T-cell (primary cell): ENCODE measurements at regions of chr19 and their contacts with region 1.

Region 1: GRCh38 chr19:11279496-11280236 is 16.3 kb upstream of the TSPAN16 start:
- DNase-seq: peak in 33 of 35 experiments; percentile 4 to 75 (median 33)
- ATAC-seq: peak; percentile 75 to 98 (median 92)
- H3K4me3 ChIP-seq: peak overlapping the region in 1 of 2 donors; percentile 23
- H3K4me3 Mint-ChIP-seq: peak overlapping the region in 2 of 3 donors; percentile 13 to 27
- H3K27ac ChIP-seq: no peak overlapping the region
- H3K27ac Mint-ChIP-seq: peak overlapping the region in 1 of 2 donors; percentile 27
- H3K4me1 ChIP-seq: peaks cover 6 to 24% of the 10 kb centered on the region in 2 experiments
- H3K4me1 Mint-ChIP-seq: peaks cover 9 to 21% (median 10%) of the 10 kb centered on the region in 3 donors
- H3K27me3 ChIP-seq: peaks cover 10 to 69% of the 10 kb centered on the region in 2 experiments
- H3K27me3 Mint-ChIP-seq: peaks cover 25 to 47% of the 10 kb centered on the region in 2 donors

Region 2: GRCh38 chr19:11261941-11262839 is 17.5 kb before region 1 on chr19 and contains the start of gene DOCK6:
- CTCF ChIA-PET with region 1: no interaction called
- POLR2A ChIA-PET with region 1: no interaction called
- DNase-seq: peak in 5 of 35 experiments; percentile 13 to 22 (median 17)
- ATAC-seq: peak; percentile 60 to 80 (median 70)
- H3K4me3 ChIP-seq: peak within 1 kb of the TSS; percentile 25 to 36
- H3K4me3 Mint-ChIP-seq: peak within 1 kb of the TSS; percentile 66 to 74 (median 69)
- H3K27ac ChIP-seq: no peak within 1 kb of the TSS
- H3K27ac Mint-ChIP-seq: no peak within 1 kb of the TSS
- H3K4me1 ChIP-seq: peaks cover 0 to 13% of the 10 kb centered on the region in 2 experiments
- H3K4me1 Mint-ChIP-seq: peaks cover 0 to 8% (median 1%) of the 10 kb centered on the region in 3 donors
- H3K27me3 ChIP-seq: peaks cover 7 to 64% of the 10 kb centered on the region in 2 experiments
- H3K27me3 Mint-ChIP-seq: peaks cover 31 to 58% of the 10 kb centered on the region in 2 donors
- total RNA-seq, gene DOCK6: 0.78 to 1.8 (median 1.0) TPM

Region 3: GRCh38 chr19:11290256-11290655 is 10.6 kb after region 1 on chr19:
- CTCF ChIA-PET with region 1: interaction called in 1 of 2 experiments, 14 read pairs
- POLR2A ChIA-PET with region 1: no interaction called
- DNase-seq: no peak
- ATAC-seq: no peak
- H3K4me3 ChIP-seq: no peak overlapping the region
- H3K4me3 Mint-ChIP-seq: no peak overlapping the region
- H3K27ac ChIP-seq: no peak overlapping the region
- H3K27ac Mint-ChIP-seq: no peak overlapping the region
- H3K4me1 ChIP-seq: peaks cover 0 to 8% of the 10 kb centered on the region in 2 experiments
- H3K4me1 Mint-ChIP-seq: peaks cover 5 to 9% (median 7%) of the 10 kb centered on the region in 3 donors
- H3K27me3 ChIP-seq: peaks cover 0 to 81% of the 10 kb centered on the region in 2 experiments
- H3K27me3 Mint-ChIP-seq: peaks cover 22 to 44% of the 10 kb centered on the region in 2 donors

Region 4: DNA sequence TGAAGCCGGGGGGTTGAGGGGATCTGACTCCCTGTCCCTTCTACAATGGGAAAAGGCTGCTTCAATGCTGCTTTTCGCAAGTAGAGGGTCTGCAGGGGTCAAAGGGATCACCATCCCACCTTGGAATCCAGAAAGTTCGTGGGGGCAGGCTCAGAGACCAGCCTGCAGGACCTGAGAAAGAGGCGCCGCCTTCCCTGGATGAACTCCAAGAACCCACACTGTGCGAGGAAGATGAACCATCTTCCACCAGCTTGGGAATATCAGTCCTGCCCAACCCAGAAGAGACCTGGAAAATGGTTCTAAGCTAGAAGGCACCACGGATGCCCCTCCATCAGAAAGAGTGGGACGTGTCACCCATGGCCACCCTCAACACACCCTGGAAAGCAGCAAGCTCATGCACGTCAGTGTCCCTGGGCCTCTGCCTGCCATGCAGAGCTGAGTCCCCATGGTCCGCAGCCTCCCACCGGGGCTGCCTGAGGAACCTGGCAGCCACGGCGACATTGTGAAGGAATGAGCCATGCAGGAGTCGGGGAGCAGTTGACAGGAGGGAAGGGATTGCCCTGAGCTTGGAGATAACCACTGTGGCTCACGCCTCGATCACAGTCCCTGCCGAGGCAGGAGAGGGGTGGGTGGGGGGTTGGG is 45.2 kb after region 1 on chr19:
- CTCF ChIA-PET with region 1: no interaction called
- POLR2A ChIA-PET with region 1: interaction called in 1 of 2 experiments, 12 read pairs
- DNase-seq: no peak
- ATAC-seq: no peak
- H3K4me3 ChIP-seq: no peak overlapping the region
- H3K4me3 Mint-ChIP-seq: no peak overlapping the region
- H3K27ac ChIP-seq: peak overlapping the region; percentile 47
- H3K27ac Mint-ChIP-seq: peak overlapping the region; percentile 78 to 83
- H3K4me1 ChIP-seq: peaks cover 2 to 12% of the 10 kb centered on the region in 2 experiments
- H3K4me1 Mint-ChIP-seq: peaks cover 13 to 19% (median 18%) of the 10 kb centered on the region in 3 donors
- H3K27me3 ChIP-seq: peaks cover 0 to 12% of the 10 kb centered on the region in 2 experiments
- H3K27me3 Mint-ChIP-seq: peaks cover 0 to 7% of the 10 kb centered on the region in 2 donors